HCT116 (cell line): ENCODE measurements at regions of chr7 and their contacts with region 1.

Region 1: DNA sequence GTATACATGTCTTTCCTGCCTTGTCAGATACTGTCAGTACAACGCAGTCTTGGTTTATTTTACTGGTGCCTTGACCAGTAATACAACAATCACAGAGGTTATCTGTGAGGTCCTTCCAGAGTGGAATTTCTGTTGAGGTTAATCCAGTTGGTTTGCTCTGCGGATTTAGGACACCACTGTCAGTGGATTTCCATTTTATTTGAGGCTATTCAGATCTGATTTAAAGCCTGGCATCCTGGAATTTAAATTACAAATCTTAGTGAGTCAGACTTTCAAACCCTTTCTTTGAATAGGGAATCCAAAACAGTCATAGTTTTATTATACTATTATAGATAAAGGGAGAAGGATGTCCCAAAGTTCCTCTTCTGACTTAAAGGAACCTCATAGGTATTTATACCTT is 40.5 kb downstream of the ANLN start:
- DNase-seq: no peak
- ATAC-seq: no peak
- H3K4me3 ChIP-seq: no peak overlapping the region
- H3K27ac ChIP-seq: no peak overlapping the region
- H3K4me1 ChIP-seq: no peaks in the 10 kb centered on the region
- H3K27me3 ChIP-seq: no peaks in the 10 kb centered on the region
- CTCF ChIP-seq: no peak
- POLR2A ChIP-seq: no peak
- RAD21 ChIP-seq: no peak

Region 2: DNA sequence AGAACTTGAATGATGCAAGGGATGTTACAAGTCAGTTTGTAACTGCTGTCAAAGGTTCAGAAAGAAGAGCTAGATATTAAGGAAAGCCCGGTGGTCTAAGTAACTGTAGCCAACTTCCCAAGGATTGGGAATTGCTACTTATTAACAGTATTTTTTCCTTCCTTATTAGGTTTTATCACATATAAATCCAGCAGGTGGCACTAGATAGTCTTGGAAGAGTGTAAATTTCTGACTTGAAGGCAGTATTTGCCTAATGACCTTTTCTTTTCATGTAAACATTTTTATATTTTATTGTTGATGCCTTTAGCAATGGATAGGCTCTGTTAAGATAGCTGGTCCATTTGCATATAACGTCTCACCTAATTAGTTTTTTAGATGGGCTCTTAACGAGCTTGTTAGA is 10.7 kb after region 1 on chr7:
- CTCF ChIA-PET with region 1: interaction called, 13 read pairs
- POLR2A ChIA-PET with region 1: interaction called, 3 read pairs
- RAD21 ChIA-PET with region 1: no interaction called
- intact Hi-C with region 1: no loop called
- DNase-seq: peak; percentile 4
- ATAC-seq: peak; percentile 58; the same call in 1 of the 2 replicates
- H3K4me3 ChIP-seq: no peak overlapping the region
- H3K27ac ChIP-seq: no peak overlapping the region
- H3K4me1 ChIP-seq: no peaks in the 10 kb centered on the region
- H3K27me3 ChIP-seq: no peaks in the 10 kb centered on the region
- CTCF ChIP-seq: peak; percentile 21 to 54 (median 23); a peak in 4 of 6 replicates
- POLR2A ChIP-seq: no peak
- RAD21 ChIP-seq: peak; percentile 33